MCF 10A (cell line): ENCODE measurements at regions of chr14 and their contacts with region 1.

Region 1: DNA sequence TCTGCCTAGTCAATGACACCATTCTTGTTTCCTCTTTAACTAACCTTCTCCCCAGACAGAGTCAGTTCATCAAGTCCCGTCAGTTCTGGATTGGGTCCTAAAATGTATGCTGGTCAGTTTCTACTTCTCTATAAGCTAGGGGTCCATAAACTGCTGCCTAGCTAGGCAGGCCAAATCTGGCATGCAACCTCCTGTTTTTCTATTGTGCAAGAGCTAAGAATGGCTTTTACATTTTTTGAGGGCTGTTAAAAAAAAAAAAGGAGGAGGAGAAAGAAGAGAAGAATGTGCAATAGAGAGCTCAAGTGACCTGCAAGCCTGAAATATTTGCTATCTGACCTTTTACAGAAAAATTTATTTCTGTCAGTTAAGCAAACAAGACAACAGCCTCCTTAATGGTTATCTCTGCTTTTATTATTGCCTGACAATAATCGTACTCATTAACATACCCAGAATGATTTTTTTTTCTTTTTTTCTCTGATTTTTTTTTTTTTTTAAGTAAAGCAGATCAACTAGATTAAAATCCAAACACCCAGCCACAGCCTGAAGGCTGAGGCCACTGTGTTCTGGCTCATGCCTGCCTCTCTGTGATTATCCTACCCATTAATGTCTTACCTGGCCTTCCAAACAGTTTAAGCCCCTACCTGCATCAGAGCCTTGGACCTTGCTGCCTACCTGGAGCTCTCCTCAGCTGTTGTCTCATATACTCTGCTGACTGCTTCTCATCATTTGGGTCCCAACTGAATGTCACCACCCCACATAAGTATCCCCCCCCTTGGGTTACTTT is 6.6 kb upstream of the TMED10 start:
- DNase-seq: peak; percentile 71
- H3K4me3 Mint-ChIP-seq: peak overlapping the region; percentile 21
- H3K27ac Mint-ChIP-seq: peak overlapping the region; percentile 57
- H3K4me1 Mint-ChIP-seq: peaks cover 20% of the 10 kb centered on the region
- H3K27me3 Mint-ChIP-seq: no peaks in the 10 kb centered on the region
- CTCF ChIP-seq: no peak

Region 2: GRCh38 chr14:75198291-75198933 is 15.4 kb after region 1 on chr14:
- CTCF ChIA-PET with region 1: interaction called, 4 read pairs
- POLR2A ChIA-PET with region 1: interaction called, 38 read pairs
- intact Hi-C with region 1: no loop called
- DNase-seq: no peak
- H3K4me3 Mint-ChIP-seq: no peak overlapping the region
- H3K27ac Mint-ChIP-seq: no peak overlapping the region
- H3K4me1 Mint-ChIP-seq: peaks cover 22% of the 10 kb centered on the region
- H3K27me3 Mint-ChIP-seq: no peaks in the 10 kb centered on the region
- CTCF ChIP-seq: no peak

Region 3: DNA sequence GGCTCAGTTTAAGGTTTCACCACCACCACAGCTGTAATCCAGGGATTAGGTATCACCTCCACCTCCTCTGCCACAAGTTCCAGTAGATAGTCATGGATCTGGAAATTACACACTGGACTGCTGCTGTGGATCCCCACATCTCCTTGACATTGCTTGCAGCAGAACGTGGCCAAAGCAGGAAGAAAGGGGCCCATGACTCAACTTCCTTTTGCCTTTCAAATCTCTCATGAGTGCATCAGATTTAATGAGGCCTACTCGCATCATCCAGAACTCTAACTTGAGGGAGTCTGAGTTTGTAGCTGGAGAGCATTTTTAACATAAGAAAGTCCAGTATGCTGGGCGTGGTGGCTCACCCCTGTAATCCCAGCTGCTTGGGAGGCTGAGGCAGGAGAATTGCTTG is 22.6 kb after region 1 on chr14:
- CTCF ChIA-PET with region 1: interaction called, 3 read pairs
- POLR2A ChIA-PET with region 1: interaction called, 38 read pairs
- intact Hi-C with region 1: no loop called
- DNase-seq: peak; percentile 12
- H3K4me3 Mint-ChIP-seq: no peak overlapping the region
- H3K27ac Mint-ChIP-seq: no peak overlapping the region
- H3K4me1 Mint-ChIP-seq: peaks cover 20% of the 10 kb centered on the region
- H3K27me3 Mint-ChIP-seq: no peaks in the 10 kb centered on the region
- CTCF ChIP-seq: no peak

Region 4: GRCh38 chr14:75223664-75224154 is 40.7 kb after region 1 on chr14:
- CTCF ChIA-PET with region 1: interaction called, 3 read pairs
- POLR2A ChIA-PET with region 1: interaction called, 11 read pairs
- intact Hi-C with region 1: no loop called
- DNase-seq: no peak
- H3K4me3 Mint-ChIP-seq: no peak overlapping the region
- H3K27ac Mint-ChIP-seq: no peak overlapping the region
- H3K4me1 Mint-ChIP-seq: peaks cover 34% of the 10 kb centered on the region
- H3K27me3 Mint-ChIP-seq: no peaks in the 10 kb centered on the region
- CTCF ChIP-seq: no peak